Activated naive CD4-positive, alpha-beta T cell treated with anti-CD3 and anti-CD28 coated beads for 36 hours (primary cell): ENCODE measurements at regions of chr4 and their contacts with region 1.

Region 1: DNA sequence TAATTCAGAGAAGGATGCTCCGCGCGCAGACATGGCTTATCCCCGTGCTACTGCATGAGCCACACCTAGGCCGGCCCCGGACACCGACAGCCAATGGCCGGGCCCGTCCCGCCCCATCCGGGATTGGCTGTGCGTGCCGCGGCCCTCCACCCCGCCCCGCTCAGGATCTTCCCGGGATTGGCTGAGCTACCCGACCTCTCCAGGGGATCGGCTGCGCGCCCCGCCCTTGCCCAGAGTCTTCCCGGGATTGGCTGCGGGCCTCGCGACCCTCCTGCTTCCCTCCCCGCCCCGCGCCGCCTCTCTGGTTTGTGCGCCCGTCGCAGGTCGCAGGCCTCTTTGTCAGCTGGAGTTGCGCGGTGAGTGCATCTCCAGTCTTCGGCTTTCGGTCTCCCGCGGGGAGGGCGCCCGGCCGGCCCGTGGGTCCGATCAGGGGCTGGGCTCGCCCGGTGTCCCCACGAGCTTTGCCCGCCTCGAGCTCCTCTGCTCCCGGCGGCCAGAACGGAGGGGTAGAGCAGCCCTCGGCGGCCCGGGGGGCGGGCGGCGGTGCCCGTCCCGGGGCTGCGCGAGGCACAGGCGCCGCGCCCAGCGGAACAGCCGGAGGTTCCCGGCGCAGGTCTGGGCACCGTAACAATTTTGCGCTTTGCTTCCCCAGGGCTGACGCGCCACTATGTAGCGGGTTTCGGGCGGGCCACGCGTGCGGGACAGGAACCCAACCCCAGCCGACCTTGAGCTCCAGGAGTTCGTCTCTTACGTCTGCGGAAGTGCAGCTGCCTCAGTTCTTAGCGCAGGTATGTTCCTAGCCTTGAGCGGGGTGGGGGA is 38.8 kb downstream of the ERVMER34-1 start:
- DNase-seq: peak; percentile 97
- H3K4me3 Mint-ChIP-seq: peak overlapping the region; percentile 96
- H3K27ac Mint-ChIP-seq: peak overlapping the region; percentile 92
- H3K4me1 Mint-ChIP-seq: peaks cover 46% of the 10 kb centered on the region
- H3K27me3 Mint-ChIP-seq: no peaks in the 10 kb centered on the region

Region 2: DNA sequence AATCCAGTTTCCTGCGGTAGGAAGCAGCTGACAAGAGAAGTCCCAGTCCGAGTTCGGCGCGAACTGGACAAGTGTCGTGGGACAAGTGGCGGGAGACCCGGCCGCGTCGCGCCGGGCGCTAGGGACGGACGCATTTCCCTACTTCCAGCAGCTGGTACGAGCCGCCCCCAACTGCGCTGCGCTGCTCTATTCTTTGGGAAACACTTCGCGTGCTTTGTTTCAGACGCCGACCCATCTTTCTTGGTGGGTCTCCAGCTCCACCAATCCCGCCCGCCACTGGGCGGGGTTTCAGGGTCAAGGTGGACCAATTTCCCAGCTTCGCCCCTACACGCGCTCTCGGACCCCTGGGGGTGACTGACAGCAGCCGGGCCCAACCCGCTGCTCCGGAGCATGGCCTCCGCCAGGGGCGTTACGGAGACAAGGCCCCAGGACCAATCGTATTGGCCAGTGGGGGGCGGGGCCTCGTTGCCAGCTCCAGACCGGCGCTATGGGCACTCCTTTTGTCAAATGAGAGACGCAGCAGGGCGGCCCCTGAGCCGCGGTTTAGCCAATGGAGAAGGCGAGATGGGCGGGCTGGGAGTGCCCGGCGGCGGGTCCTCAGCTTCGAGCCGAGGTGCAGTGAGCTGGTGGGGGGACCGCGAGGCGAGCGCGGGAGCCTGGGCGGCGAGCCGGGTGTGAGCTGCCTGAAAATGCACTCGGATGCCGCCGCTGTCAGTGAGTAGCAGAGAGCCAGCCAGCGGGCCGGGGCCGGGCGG is 869.6 kb before region 1 on chr4 and contains the start of gene DCUN1D4:
- CTCF ChIA-PET with region 1: no interaction called
- intact Hi-C with region 1: loop called (anchors 1 kb)
- DNase-seq: peak; percentile 99
- H3K4me3 Mint-ChIP-seq: peak within 1 kb of the TSS; percentile 91
- H3K27ac Mint-ChIP-seq: peak within 1 kb of the TSS; percentile 87
- H3K4me1 Mint-ChIP-seq: peaks cover 15% of the 10 kb centered on the region
- H3K27me3 Mint-ChIP-seq: no peaks in the 10 kb centered on the region
- total RNA-seq, gene DCUN1D4: 27.7 to 28.2 TPM

Region 3: DNA sequence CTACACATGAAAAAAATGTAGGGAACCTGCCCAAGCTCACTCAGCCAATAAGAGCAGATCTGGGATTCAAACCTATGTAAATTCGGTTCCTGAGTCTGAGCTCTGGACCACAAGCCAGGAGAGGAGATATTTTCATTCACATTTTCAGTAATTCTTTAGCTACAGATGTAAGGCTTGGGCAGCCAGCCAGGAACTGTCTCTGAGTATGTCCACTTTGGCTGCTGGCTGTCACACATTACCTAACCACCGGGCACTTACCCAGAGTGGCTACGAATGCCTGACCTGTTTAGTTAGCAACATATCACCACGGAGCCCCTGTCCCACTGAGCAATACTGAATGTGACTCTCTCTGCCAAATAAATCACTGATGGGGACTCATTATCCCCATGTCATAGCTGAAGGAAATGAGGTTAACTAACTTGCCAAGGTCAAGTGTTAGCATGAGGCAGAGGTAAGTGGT is 68.6 kb before region 1 on chr4:
- CTCF ChIA-PET with region 1: no interaction called
- intact Hi-C with region 1: loop called (anchors 1 kb)
- DNase-seq: no peak
- H3K4me3 Mint-ChIP-seq: no peak overlapping the region
- H3K27ac Mint-ChIP-seq: no peak overlapping the region
- H3K4me1 Mint-ChIP-seq: peaks cover 12% of the 10 kb centered on the region
- H3K27me3 Mint-ChIP-seq: no peaks in the 10 kb centered on the region

Region 4: DNA sequence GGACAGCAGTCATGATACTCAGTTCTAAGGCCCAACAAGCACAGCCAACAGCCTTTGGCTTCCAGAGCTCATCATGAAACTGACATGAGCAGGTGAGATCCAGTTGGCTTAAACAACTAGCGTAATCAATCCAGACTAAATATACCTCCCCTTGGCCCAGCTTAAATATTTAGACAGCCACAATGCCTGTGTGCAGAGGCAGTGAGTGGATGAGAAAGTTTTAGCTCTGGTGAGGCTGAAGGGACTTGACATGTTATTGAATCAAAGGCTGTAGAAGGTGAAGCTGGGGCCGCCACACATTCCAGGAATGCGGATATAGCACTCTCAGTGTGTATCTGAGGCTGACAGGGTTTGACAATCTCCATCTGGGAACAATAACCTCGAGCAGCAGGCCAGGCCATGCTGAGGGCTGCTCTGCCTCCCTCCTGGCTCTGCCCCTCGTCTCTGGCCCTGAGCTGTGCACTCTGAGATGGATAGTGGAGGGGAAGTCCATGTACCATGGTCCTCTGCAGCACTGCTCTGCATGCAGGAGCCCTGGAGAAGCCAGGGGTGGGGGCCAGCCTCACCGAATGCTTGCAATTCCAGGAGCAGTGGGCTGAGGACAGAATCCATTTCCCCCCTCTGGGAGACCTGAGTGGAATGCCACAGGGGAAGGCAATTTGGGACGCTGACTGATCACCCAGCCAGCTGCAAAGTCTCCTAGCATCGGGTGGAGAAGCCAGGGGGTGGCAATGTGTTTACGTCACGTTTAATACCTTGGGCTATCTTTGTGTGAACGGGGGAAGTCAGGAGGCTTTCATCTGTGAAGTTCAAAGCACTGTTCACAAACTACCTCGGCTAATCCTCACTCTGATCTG is 112.5 kb after region 1 on chr4:
- CTCF ChIA-PET with region 1: no interaction called
- intact Hi-C with region 1: loop called (anchors 2 kb)
- DNase-seq: no peak
- H3K4me3 Mint-ChIP-seq: no peak overlapping the region
- H3K27ac Mint-ChIP-seq: no peak overlapping the region
- H3K4me1 Mint-ChIP-seq: peaks cover 29% of the 10 kb centered on the region
- H3K27me3 Mint-ChIP-seq: no peaks in the 10 kb centered on the region

Region 5: DNA sequence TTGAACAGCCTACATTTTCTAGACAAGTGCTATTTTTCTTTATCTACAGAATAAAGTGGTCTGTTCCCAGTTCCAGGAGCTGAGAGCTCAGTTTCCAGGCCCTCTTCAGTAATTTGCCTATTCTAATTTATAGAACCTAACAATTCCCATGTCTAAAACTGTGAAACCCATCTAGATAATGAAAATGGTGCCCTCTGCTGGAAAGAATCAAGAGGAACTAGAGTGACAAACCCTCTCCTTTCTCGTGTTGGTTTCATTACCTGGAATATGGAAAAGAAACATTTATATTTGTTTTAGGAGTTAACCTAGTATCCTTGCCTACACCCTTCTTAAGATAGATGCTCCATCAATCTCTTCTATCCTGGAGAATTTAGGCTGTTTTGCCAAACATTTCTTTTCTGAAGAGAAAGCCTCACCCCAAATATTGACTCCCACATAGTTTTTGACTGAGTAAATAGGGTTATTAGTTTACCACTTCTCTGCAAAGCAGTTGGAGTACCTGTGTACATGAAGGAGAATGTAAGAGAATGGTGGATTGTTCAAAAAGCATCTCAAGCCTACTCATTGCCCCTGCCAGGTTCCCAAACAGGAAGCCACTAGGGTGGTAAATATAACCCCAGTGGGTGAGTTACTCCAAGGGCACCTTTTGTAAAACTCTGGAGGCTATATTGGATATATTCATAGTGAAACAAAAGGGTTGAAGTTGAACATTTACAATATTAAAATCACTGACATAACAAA is 271.4 kb after region 1 on chr4:
- CTCF ChIA-PET with region 1: interaction called, 3 read pairs
- intact Hi-C with region 1: loop called (anchors 2 kb)
- DNase-seq: no peak
- H3K4me3 Mint-ChIP-seq: no peak overlapping the region
- H3K27ac Mint-ChIP-seq: no peak overlapping the region
- H3K4me1 Mint-ChIP-seq: no peaks in the 10 kb centered on the region
- H3K27me3 Mint-ChIP-seq: no peaks in the 10 kb centered on the region

Region 6: DNA sequence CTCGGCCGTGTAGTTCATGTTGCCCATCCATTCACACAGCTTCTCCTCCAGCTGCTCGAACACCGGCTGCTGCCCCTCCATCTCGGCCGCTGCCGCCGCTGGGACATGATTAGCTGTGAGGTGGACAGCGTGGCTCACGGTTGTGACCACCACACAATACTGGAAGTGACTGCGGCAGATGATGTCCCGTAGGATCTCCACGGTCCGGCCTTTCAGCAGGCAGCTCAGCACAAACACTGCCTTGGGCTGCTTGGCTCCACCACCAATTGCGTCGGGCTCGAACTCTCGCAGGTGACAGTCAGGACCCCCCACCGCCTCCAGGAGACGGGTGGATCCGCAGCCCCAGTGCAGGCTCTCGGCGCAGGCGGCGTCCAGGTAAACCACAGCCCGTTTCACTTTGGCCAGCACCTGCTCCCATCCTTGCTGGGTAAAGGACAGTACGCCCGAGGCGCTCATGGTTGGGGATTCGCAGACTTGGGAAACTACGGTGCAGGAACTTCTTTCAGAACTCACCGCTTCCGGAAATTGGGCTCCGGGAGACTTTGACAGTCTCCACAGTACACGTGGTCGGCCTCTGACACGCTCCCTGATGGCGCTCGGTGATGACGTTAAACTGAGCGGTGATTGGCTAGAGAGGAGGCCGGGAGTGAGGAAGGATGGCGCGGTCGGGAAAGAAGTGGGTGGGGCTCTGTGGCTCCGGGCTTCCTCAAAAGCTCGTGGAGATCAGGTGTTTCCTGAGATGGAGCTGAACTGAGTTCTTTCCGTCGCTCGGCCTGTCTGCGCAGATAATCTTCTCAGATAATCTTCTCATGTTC is 653.3 kb after region 1 on chr4 and contains the start of gene SCFD2:
- CTCF ChIA-PET with region 1: no interaction called
- intact Hi-C with region 1: loop called (anchors 1 kb)
- DNase-seq: peak; percentile 99
- H3K4me3 Mint-ChIP-seq: peak within 1 kb of the TSS; percentile 96
- H3K27ac Mint-ChIP-seq: peak within 1 kb of the TSS; percentile 96
- H3K4me1 Mint-ChIP-seq: peaks cover 38% of the 10 kb centered on the region
- H3K27me3 Mint-ChIP-seq: peaks cover 3% of the 10 kb centered on the region
- total RNA-seq, gene SCFD2: 14.3 to 15.1 TPM